ENCODE measurements at regions of chr19 and their contacts with region 1.

Region 1: DNA sequence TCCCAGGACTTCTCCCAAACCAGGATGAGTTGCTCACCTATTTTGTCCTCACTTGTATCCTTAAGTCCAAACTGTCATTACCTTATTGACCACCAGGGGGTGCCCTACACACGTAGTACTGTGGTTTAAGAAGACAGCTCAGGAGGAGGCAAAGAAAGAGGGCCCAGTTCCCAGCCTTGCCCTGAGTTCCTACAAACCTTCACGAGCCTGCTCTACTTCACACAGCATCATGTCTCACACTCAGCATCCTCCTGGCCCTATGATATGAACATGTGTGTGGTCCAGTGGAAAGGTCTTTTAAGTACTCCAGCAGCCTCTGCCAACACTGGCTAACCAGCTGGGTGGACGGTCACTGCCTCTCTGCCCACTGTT is 8.1 kb upstream of the ZNF784 start:
- DNase-seq: peak; percentile 85 to 95 (median 88)
- H3K4me3 ChIP-seq: no peak overlapping the region
- H3K4me3 Mint-ChIP-seq: peak overlapping the region; percentile 4 to 68 (median 52)
- H3K27ac ChIP-seq: no peak overlapping the region
- H3K27ac Mint-ChIP-seq: peak overlapping the region; percentile 69 to 98 (median 91)
- H3K4me1 ChIP-seq: peaks cover 41% of the 10 kb centered on the region
- H3K4me1 Mint-ChIP-seq: peaks cover 30 to 55% (median 43%) of the 10 kb centered on the region in 4 donors
- H3K27me3 ChIP-seq: no peaks in the 10 kb centered on the region
- H3K27me3 Mint-ChIP-seq: no peaks in the 10 kb centered on the region

Region 2: GRCh38 chr19:55426042-55426441 is 206.4 kb before region 1 on chr19:
- CTCF ChIA-PET with region 1: no interaction called
- POLR2A ChIA-PET with region 1: no interaction called
- intact Hi-C with region 1: no loop called
- DNase-seq: no peak
- H3K4me3 ChIP-seq: no peak overlapping the region
- H3K4me3 Mint-ChIP-seq: no peak overlapping the region
- H3K27ac ChIP-seq: no peak overlapping the region
- H3K27ac Mint-ChIP-seq: no peak overlapping the region
- H3K4me1 ChIP-seq: peaks cover 13% of the 10 kb centered on the region
- H3K4me1 Mint-ChIP-seq: peaks cover 5 to 11% (median 7%) of the 10 kb centered on the region in 4 donors
- H3K27me3 ChIP-seq: no peaks in the 10 kb centered on the region
- H3K27me3 Mint-ChIP-seq: peaks cover 7 to 19% of the 10 kb centered on the region in 2 donors

Region 3: DNA sequence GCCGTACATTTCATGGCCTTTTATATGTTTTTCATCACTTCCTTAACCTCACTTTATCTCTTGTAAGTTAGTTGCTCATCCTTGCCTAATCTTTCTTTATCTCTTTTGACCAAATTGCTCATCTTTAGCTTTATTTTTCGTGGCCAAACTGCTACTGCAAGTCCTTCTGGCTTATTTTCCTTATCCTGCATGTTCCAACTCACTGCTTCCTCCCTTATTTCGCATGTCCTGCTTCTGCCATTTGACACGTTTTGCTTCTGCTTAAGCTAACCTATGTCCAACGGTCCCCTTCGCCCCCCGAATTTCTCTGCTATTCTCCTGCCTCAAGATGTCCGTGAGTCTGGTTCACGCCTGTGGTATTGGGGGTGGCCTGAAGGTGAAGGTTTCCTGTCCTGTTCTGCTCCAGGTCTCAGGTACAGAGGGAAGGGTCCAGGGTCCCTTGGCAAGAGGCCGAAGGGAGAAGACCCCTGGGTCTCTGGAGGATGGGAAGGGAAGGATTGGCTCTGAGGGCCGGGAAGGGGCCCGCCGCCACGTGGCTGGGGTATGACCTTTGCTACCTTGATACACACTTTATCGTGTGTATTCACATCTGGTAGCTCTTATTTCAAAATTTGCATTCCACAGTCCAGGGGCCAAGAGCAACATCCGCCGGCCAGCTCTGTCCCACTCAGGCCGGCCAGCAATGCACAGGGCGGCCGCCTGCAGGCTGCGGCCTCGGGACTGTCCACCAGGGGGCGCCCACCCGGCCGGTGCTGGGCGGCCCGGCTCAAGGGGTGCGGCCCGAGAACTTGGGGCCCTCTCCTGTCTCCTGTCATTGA is 165.0 kb before region 1 on chr19:
- CTCF ChIA-PET with region 1: interaction called, 42 read pairs
- POLR2A ChIA-PET with region 1: interaction called, 3 read pairs
- intact Hi-C with region 1: loop called (anchors 2 kb)
- DNase-seq: peak in 4 of 5 donors; percentile 52 to 61 (median 52)
- H3K4me3 ChIP-seq: no peak overlapping the region
- H3K4me3 Mint-ChIP-seq: peak overlapping the region in 1 of 8 donors; percentile 36
- H3K27ac ChIP-seq: no peak overlapping the region
- H3K27ac Mint-ChIP-seq: peak overlapping the region in 3 of 7 donors; percentile 30 to 38 (median 34)
- H3K4me1 ChIP-seq: peaks cover 2% of the 10 kb centered on the region
- H3K4me1 Mint-ChIP-seq: peaks cover 2 to 7% (median 4%) of the 10 kb centered on the region in 4 donors
- H3K27me3 ChIP-seq: no peaks in the 10 kb centered on the region
- H3K27me3 Mint-ChIP-seq: no peaks in the 10 kb centered on the region

Region 4: DNA sequence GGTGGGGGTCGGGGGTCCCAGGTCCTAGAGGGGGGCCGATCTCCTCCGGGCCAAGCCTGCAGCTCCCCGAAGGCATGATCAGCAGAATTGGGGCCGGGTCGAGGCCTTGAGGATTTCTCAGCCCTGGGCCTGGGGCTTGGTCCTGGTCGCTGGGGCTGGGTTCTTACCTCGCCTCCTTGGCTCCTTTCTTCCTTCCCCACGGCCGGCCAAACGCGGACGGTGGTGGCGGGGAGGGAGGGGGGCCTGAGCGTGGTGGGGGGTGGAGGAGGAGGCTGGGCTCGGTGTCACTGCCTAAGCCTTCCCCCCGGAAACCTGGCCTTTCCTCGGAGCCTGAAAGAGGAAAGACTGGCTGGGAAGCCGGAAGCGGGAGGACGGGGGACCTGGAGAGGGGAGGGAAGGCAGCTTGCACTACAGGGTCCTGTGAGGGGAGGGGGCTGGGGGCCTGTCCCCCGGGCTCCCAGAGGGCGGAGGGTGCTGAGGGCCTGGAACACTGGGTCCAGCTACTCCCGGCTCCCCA is 51.8 kb before region 1 on chr19 and contains the start of gene ZNF579:
- CTCF ChIA-PET with region 1: interaction called, 23 read pairs
- POLR2A ChIA-PET with region 1: interaction called, 11 read pairs
- intact Hi-C with region 1: loop called (anchors 1 kb)
- DNase-seq: peak; percentile 58 to 78 (median 63)
- H3K4me3 ChIP-seq: peak within 1 kb of the TSS; percentile 61 to 68
- H3K4me3 Mint-ChIP-seq: peak within 1 kb of the TSS; percentile 81 to 97 (median 88)
- H3K27ac ChIP-seq: peak within 1 kb of the TSS; percentile 69
- H3K27ac Mint-ChIP-seq: peak within 1 kb of the TSS; percentile 86 to 95 (median 93)
- H3K4me1 ChIP-seq: peaks cover 21% of the 10 kb centered on the region
- H3K4me1 Mint-ChIP-seq: peaks cover 22 to 38% (median 25%) of the 10 kb centered on the region in 4 donors
- H3K27me3 ChIP-seq: no peaks in the 10 kb centered on the region
- H3K27me3 Mint-ChIP-seq: peaks cover 0 to 1% of the 10 kb centered on the region in 2 donors
- total RNA-seq, gene ZNF579: 8.0 to 9.6 TPM

Region 5: GRCh38 chr19:55599468-55600279 is 32.8 kb before region 1 on chr19 and contains the start of gene FIZ1:
- CTCF ChIA-PET with region 1: interaction called, 20 read pairs
- POLR2A ChIA-PET with region 1: interaction called, 67 read pairs
- intact Hi-C with region 1: loop called (anchors 1 kb)
- DNase-seq: peak; percentile 96 to 98 (median 97)
- H3K4me3 ChIP-seq: peak within 1 kb of the TSS; percentile 93 to 99
- H3K4me3 Mint-ChIP-seq: peak within 1 kb of the TSS; percentile 98 to 100 (median 98)
- H3K27ac ChIP-seq: peak within 1 kb of the TSS; percentile 89
- H3K27ac Mint-ChIP-seq: peak within 1 kb of the TSS; percentile 96 to 100 (median 99)
- H3K4me1 ChIP-seq: peaks cover 28% of the 10 kb centered on the region
- H3K4me1 Mint-ChIP-seq: peaks cover 22 to 38% (median 25%) of the 10 kb centered on the region in 4 donors
- H3K27me3 ChIP-seq: no peaks in the 10 kb centered on the region
- H3K27me3 Mint-ChIP-seq: no peaks in the 10 kb centered on the region
- total RNA-seq, gene FIZ1: 20.8 to 26.4 TPM

Region 6: GRCh38 chr19:55643348-55644176 is 11.1 kb after region 1 on chr19 and contains the start of gene ZNF581:
- CTCF ChIA-PET with region 1: interaction called, 36 read pairs
- POLR2A ChIA-PET with region 1: interaction called, 85 read pairs
- intact Hi-C with region 1: loop called (anchors 1 kb)
- DNase-seq: peak; percentile 77 to 85 (median 79)
- H3K4me3 ChIP-seq: peak within 1 kb of the TSS; percentile 53 to 83
- H3K4me3 Mint-ChIP-seq: peak within 1 kb of the TSS; percentile 86 to 96 (median 92)
- H3K27ac ChIP-seq: peak within 1 kb of the TSS; percentile 69
- H3K27ac Mint-ChIP-seq: peak within 1 kb of the TSS; percentile 87 to 99 (median 94)
- H3K4me1 ChIP-seq: peaks cover 49% of the 10 kb centered on the region
- H3K4me1 Mint-ChIP-seq: peaks cover 29 to 62% (median 45%) of the 10 kb centered on the region in 4 donors
- H3K27me3 ChIP-seq: no peaks in the 10 kb centered on the region
- H3K27me3 Mint-ChIP-seq: no peaks in the 10 kb centered on the region
- total RNA-seq, gene ZNF581: 21.2 to 23.4 TPM

Region 7: DNA sequence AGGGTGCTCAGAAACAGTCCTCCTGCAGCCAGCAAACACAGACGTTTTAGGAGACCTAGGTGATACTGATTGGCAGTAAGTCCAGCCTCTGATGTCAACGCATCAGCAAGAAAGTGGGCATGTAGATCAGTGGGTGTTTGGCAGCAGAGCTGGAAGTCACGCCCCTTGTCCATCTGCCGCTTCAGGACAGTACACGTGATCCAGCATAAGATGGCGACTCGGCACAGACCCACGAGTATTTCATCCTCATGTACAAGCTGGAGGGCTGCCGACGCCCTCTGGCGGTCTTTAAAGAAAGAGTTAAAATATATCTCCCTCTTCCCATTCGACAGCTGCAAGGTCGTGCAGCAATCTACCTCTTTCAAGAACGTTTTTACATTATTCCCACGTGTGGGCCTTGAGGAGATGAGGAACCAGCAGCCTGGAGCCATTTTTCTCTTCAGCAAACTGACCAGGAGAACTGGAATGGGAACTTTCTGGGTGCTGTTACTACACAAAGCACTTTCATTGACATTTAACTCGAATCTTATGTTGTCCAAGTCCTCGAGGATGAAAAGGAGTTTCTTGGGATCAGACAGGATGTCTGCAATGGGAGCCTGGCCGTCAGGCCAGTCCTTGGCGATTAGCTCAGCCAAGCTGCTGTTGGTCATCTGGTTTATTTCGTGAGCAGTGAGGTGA is 177.1 kb after region 1 on chr19:
- CTCF ChIA-PET with region 1: interaction called, 10 read pairs
- POLR2A ChIA-PET with region 1: interaction called, 4 read pairs
- intact Hi-C with region 1: no loop called
- DNase-seq: peak in 4 of 5 donors; percentile 1 to 13 (median 7)
- H3K4me3 ChIP-seq: no peak overlapping the region
- H3K4me3 Mint-ChIP-seq: peak overlapping the region in 1 of 8 donors; percentile 61
- H3K27ac ChIP-seq: no peak overlapping the region
- H3K27ac Mint-ChIP-seq: no peak overlapping the region
- H3K4me1 ChIP-seq: no peaks in the 10 kb centered on the region
- H3K4me1 Mint-ChIP-seq: peaks cover 0 to 7% (median under 1%) of the 10 kb centered on the region in 4 donors
- H3K27me3 ChIP-seq: no peaks in the 10 kb centered on the region
- H3K27me3 Mint-ChIP-seq: peaks cover 11 to 15% of the 10 kb centered on the region in 2 donors

Region 8: GRCh38 chr19:55877211-55877610 is 244.8 kb after region 1 on chr19:
- CTCF ChIA-PET with region 1: no interaction called
- POLR2A ChIA-PET with region 1: no interaction called
- intact Hi-C with region 1: no loop called
- DNase-seq: no peak
- H3K4me3 ChIP-seq: no peak overlapping the region
- H3K4me3 Mint-ChIP-seq: no peak overlapping the region
- H3K27ac ChIP-seq: no peak overlapping the region
- H3K27ac Mint-ChIP-seq: no peak overlapping the region
- H3K4me1 ChIP-seq: no peaks in the 10 kb centered on the region
- H3K4me1 Mint-ChIP-seq: no peaks in the 10 kb centered on the region
- H3K27me3 ChIP-seq: no peaks in the 10 kb centered on the region
- H3K27me3 Mint-ChIP-seq: no peaks in the 10 kb centered on the region

Measured in CD4-positive, alpha-beta memory T cell (primary cell).